K562 (cell line): ENCODE measurements at regions of chr1 and their contacts with region 1.

Region 1: DNA sequence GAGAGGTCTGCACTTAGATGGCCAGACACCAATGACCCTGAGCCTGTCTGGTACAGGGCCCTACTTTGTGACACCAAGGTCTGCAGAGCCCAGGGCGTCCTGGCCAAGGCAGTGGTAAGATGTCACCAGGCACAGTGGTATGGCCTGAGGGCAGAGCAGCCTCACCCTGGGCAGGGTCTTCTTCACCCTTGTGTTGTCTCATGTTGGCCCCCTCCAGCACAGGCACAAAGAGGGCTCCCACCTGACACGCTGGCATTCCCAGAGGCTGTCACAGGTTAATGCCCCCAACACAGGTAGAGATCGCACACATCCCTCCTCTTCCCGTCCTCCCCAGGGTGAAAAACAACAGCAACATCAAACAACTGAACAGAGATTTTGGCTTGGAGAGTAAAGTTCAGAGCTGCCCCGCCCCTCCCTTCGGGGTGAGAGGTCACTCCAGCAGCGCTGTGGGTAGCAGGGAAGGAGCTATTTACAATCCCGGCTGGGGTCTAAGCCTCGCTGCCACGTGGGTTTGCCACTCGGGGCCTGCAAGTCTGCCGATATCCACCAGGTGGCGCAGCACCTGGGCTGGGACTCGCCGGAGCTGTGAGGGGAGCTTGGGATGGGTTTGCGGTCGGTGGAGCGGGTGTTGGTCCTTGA is 12.6 kb downstream of the EFNA3 start:
- DNase-seq: peak; percentile 79 to 92 (median 82)
- ATAC-seq: peak; percentile 89
- H3K4me3 ChIP-seq: no peak overlapping the region
- H3K27ac ChIP-seq: no peak overlapping the region
- H3K4me1 ChIP-seq: peaks cover 14 to 26% of the 10 kb centered on the region in 2 experiments; a peak in 4 of 5 replicates
- H3K27me3 ChIP-seq: peaks cover 0 to 2% of the 10 kb centered on the region in 2 experiments; a peak in 1 of 5 replicates
- CTCF ChIP-seq: peak; percentile 93 to 98 (median 97)
- EP300 ChIP-seq: peak; percentile 28; the same call in 1 of the 2 replicates
- POLR2A ChIP-seq: no peak
- RAD21 ChIP-seq: peak; percentile 78 to 85

Region 2: DNA sequence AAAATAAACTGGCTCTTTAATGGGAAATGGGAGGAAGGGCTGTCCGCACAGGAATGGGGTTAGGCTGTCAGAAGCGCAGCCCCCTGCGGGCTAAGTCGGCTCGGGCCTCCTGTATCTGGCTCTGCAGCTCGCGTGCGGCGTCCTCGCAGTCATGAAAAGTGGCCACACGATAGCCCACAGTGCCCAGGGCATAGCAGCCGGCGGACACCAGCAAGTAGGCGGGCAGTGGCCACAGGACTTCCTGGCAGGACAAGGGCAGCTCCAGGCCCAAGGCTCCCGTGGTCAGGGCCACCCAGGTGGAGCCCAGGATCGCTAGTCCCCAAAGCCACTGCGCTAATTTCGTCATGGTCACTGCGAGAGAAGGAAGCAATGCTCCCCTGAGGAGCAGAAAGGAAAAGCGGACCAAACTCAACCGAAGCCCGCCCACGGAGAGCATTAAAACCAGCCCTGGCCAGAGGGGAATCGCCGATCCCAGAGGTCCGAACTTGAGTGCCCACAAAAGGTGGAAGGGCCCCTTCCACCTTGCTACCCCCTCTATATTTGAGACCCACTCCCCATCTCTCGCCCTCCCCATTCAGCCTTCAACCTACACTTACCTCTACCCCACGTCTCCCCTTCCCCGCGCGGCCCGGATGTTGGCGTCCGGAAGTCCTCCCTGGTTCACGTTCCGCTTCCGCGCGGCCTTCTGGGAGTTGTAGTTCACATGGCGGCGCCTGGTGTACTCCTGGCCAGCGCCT is 48.9 kb after region 1 on chr1 and contains the start of gene DPM3:
- CTCF ChIA-PET with region 1: no interaction called
- POLR2A ChIA-PET with region 1: interaction called, 3 read pairs
- in situ Hi-C with region 1: no loop called
- intact Hi-C with region 1: loop called (anchors 2 kb)
- DNase-seq: peak; percentile 85 to 95 (median 87)
- ATAC-seq: peak; percentile 81
- H3K4me3 ChIP-seq: peak within 1 kb of the TSS; percentile 79
- H3K27ac ChIP-seq: peak within 1 kb of the TSS; percentile 95
- H3K4me1 ChIP-seq: peaks cover 24 to 48% of the 10 kb centered on the region in 2 experiments
- H3K27me3 ChIP-seq: no peaks in the 10 kb centered on the region
- CTCF ChIP-seq: no peak
- EP300 ChIP-seq: no peak
- POLR2A ChIP-seq: peak; percentile 91
- RAD21 ChIP-seq: no peak
- polyA plus RNA-seq, gene DPM3: 12.6 to 36.4 TPM

Region 3: GRCh38 chr1:155167166-155168104 is 76.2 kb after region 1 on chr1:
- CTCF ChIA-PET with region 1: interaction called, 59 read pairs
- POLR2A ChIA-PET with region 1: interaction called, 9 read pairs
- in situ Hi-C with region 1: loop called (anchors 5 kb)
- intact Hi-C with region 1: loop called (anchors 1 kb)
- DNase-seq: peak; percentile 83 to 95 (median 86)
- ATAC-seq: peak; percentile 93
- H3K4me3 ChIP-seq: peak overlapping the region; percentile 13; the same call in 1 of the 2 replicates
- H3K27ac ChIP-seq: no peak overlapping the region; the same call in 2 of the 3 replicates
- H3K4me1 ChIP-seq: peaks cover 10 to 11% of the 10 kb centered on the region in 2 experiments; a peak in 4 of 5 replicates
- H3K27me3 ChIP-seq: no peaks in the 10 kb centered on the region
- CTCF ChIP-seq: peak; percentile 97 to 99 (median 97)
- EP300 ChIP-seq: no peak
- POLR2A ChIP-seq: no peak
- RAD21 ChIP-seq: peak; percentile 98 to 99

Region 4: DNA sequence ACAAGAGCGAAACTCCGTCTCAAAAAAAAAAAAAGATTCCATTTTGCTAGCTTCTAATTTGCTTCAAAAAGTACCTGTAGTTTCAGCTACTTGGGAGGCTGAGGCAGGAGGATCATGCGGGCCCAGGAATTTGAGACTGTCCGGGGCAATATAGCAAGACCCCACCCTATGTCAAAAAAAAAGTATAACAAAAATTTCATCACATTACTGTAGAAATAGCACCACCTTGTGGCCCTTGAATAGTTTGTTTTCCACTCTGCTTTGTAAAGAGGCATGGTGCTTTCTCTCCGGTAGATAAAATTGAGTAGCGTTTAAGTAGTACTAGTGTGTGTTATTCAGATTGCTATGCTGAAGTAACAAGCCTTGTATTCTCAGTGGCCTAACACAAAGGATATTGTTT is 500.6 kb after region 1 on chr1:
- CTCF ChIA-PET with region 1: no interaction called
- POLR2A ChIA-PET with region 1: no interaction called
- in situ Hi-C with region 1: loop called (anchors 10 kb)
- intact Hi-C with region 1: loop called (anchors 10 kb)
- DNase-seq: peak; percentile 31 to 78 (median 40)
- ATAC-seq: peak; percentile 89
- H3K4me3 ChIP-seq: no peak overlapping the region
- H3K27ac ChIP-seq: no peak overlapping the region
- H3K4me1 ChIP-seq: no peaks in the 10 kb centered on the region; a peak in 1 of 5 replicates
- H3K27me3 ChIP-seq: no peaks in the 10 kb centered on the region
- CTCF ChIP-seq: peak; percentile 44 to 79 (median 62); a peak in 5 of 6 replicates
- EP300 ChIP-seq: no peak
- POLR2A ChIP-seq: no peak
- RAD21 ChIP-seq: peak; percentile 68 to 72